ENCODE measurements at regions of chrX and their contacts with region 1.

Region 1: GRCh38 chrX:131792789-131793462 is 230.2 kb upstream of the STK26 start:
- DNase-seq: peak in 4 of 5 donors; percentile 46 to 90 (median 71)
- ATAC-seq: peak; percentile 71 to 96 (median 86)
- H3K4me3 ChIP-seq: peak overlapping the region in 11 of 12 donors; percentile 13 to 53 (median 34)
- H3K27ac ChIP-seq: peak overlapping the region in 9 of 12 donors; percentile 41 to 92 (median 73)
- H3K4me1 ChIP-seq: peaks cover 0 to 10% (median 0%) of the 10 kb centered on the region in 12 donors
- H3K27me3 ChIP-seq: peaks cover 0 to 23% (median 0%) of the 10 kb centered on the region in 9 donors
- CTCF ChIP-seq: peak in 8 of 12 donors; percentile 9 to 58 (median 32)
- POLR2A ChIP-seq: no peak

Region 2: GRCh38 chrX:131709553-131709952 is 83.4 kb before region 1 on chrX:
- intact Hi-C with region 1: loop called in 1 of 10 experiments (anchors 5 kb)
- DNase-seq: no peak
- ATAC-seq: no peak
- H3K4me3 ChIP-seq: no peak overlapping the region
- H3K27ac ChIP-seq: no peak overlapping the region
- H3K4me1 ChIP-seq: no peaks in the 10 kb centered on the region
- H3K27me3 ChIP-seq: no peaks in the 10 kb centered on the region
- CTCF ChIP-seq: no peak
- POLR2A ChIP-seq: no peak

Region 3: DNA sequence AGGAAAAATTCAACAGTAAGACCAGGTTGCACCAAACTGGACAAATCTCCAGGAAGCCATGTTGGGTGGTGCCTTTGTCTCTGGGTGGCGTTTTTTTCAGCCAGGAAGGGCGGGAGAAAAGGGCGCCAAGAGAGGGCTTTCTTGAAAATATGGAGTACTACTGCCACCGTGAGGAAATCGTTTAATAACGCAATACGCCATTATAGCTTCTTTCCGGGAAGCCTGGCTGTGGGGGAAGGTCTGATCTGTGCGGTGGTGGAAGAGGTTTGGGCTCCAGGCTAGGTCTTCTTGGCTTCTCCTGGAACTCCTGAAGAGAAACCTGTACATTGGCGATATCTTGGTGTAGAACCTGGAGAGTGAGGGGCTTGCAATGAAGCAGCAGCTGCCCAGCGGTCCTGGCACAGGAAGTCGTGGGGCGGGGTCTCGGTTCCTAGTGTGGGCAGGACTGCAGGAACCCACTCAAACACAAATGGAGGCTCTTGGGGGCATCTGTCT is 46.4 kb before region 1 on chrX:
- intact Hi-C with region 1: loop called in 1 of 10 experiments (anchors 2 kb)
- DNase-seq: peak in 2 of 5 donors; percentile 84 to 87
- ATAC-seq: peak in 2 of 4 donors; percentile 84 to 87
- H3K4me3 ChIP-seq: peak overlapping the region in 10 of 12 donors; percentile 4 to 66 (median 34)
- H3K27ac ChIP-seq: peak overlapping the region in 10 of 12 donors; percentile 22 to 92 (median 68)
- H3K4me1 ChIP-seq: peaks cover 0 to 5% (median 0%) of the 10 kb centered on the region in 12 donors
- H3K27me3 ChIP-seq: no peaks in the 10 kb centered on the region
- CTCF ChIP-seq: peak in 4 of 12 donors; percentile 8 to 58 (median 38)
- POLR2A ChIP-seq: no peak

Region 4: DNA sequence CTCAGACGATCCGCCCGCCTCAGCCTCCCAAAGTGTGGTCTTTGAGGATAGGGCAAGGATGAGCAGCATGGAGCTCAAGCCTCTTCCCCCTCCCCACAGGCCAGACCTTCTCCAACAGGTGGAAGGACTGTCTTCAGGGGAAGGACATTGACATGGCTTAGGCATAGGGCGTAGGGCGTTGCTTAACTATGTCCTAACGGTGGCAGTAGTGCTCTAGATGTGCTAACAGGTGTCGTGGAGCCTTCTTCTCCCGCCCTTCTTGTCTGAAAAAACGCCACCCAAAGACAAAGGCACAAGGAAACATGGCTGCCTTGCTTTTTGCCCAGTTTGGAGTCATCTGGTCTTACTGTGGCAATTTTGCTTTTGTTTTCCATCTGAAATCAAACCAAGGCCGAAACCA is 29.3 kb before region 1 on chrX:
- intact Hi-C with region 1: loop called in 1 of 10 experiments (anchors 2 kb)
- DNase-seq: peak in 2 of 5 donors; percentile 78
- ATAC-seq: peak in 3 of 4 donors; percentile 42 to 95 (median 93)
- H3K4me3 ChIP-seq: peak overlapping the region in 5 of 12 donors; percentile 1 to 55 (median 47)
- H3K27ac ChIP-seq: peak overlapping the region in 5 of 12 donors; percentile 41 to 76 (median 50)
- H3K4me1 ChIP-seq: peaks cover 0 to 13% (median 0%) of the 10 kb centered on the region in 12 donors
- H3K27me3 ChIP-seq: peaks cover 0 to 11% (median 0%) of the 10 kb centered on the region in 9 donors
- CTCF ChIP-seq: peak in 6 of 12 donors; percentile 4 to 64 (median 52)
- POLR2A ChIP-seq: no peak

Region 5: GRCh38 chrX:131812836-131813825 is 20.2 kb after region 1 on chrX:
- intact Hi-C with region 1: loop called in 1 of 10 experiments (anchors 1 kb)
- DNase-seq: peak in 4 of 5 donors; percentile 53 to 80 (median 66)
- ATAC-seq: peak; percentile 83 to 96 (median 90)
- H3K4me3 ChIP-seq: peak overlapping the region in 10 of 12 donors; percentile 37 to 61 (median 52)
- H3K27ac ChIP-seq: peak overlapping the region; percentile 40 to 93 (median 74)
- H3K4me1 ChIP-seq: peaks cover 0 to 21% (median 0%) of the 10 kb centered on the region in 12 donors
- H3K27me3 ChIP-seq: no peaks in the 10 kb centered on the region
- CTCF ChIP-seq: peak in 10 of 12 donors; percentile 12 to 63 (median 34)
- POLR2A ChIP-seq: no peak